Ascending aorta (tissue), 2 donors: ENCODE measurements at regions of chr19 and their contacts with region 1.

Region 1: GRCh38 chr19:1438035-1438932 is at the start of gene RPS15:
- DNase-seq: peak; percentile 63 to 95
- H3K4me3 ChIP-seq: peak within 1 kb of the TSS; percentile 75 to 81
- H3K27ac ChIP-seq: peak within 1 kb of the TSS; percentile 85
- H3K4me1 ChIP-seq: peaks cover 8 to 14% of the 10 kb centered on the region in 2 donors
- H3K27me3 ChIP-seq: no peaks in the 10 kb centered on the region
- CTCF ChIP-seq: peak; percentile 93 to 96 (median 94)
- total RNA-seq, gene RPS15: 3,111 TPM

Region 2: GRCh38 chr19:1260636-1261537 is 177.4 kb before region 1 on chr19:
- intact Hi-C with region 1: no loop called
- DNase-seq: peak; percentile 84 to 98
- H3K4me3 ChIP-seq: peak overlapping the region; percentile 76 to 83
- H3K27ac ChIP-seq: peak overlapping the region; percentile 96 to 99
- H3K4me1 ChIP-seq: peaks cover 25 to 54% of the 10 kb centered on the region in 2 donors
- H3K27me3 ChIP-seq: no peaks in the 10 kb centered on the region
- CTCF ChIP-seq: no peak

Region 3: DNA sequence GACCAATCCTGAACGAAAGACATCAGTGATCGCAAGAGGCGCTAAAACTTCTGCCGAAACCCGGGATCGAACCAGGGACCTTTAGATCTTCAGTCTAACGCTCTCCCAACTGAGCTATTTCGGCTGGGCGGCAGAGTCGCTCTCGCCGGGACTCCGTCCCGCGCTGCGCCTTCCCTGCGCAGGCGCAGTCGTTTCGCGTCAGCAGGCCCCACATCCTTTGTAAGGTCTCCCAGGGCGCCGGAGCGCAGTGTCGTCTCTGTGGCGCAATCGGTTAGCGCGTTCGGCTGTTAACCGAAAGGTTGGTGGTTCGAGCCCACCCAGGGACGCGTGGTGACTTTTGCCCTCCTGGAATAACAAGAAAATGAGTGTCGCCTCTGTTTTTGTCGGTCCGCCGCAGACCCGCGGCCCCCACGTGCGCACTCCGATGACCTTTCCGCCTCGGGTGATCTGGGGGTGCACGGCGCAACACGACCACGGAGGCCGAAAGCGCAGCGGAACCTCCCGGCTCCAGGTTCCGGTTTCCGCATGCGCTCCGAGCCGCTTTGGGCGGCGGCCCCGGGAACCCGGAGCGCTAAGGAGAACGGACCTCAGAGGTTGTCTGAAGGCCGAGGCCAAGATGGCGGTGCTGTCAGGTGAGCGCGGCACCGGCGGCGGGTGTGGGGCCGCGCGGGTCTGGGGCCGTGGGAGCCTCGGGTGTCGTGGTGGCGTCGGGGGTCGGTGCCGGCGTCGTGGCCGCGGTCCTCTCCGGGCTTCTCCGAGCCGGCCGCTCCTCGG is 54.8 kb before region 1 on chr19 and contains the start of gene NDUFS7:
- intact Hi-C with region 1: loop called (anchors 1 kb)
- DNase-seq: peak; percentile 47 to 93
- H3K4me3 ChIP-seq: peak within 1 kb of the TSS; percentile 81
- H3K27ac ChIP-seq: peak within 1 kb of the TSS; percentile 76 to 78
- H3K4me1 ChIP-seq: peaks cover 8 to 10% of the 10 kb centered on the region in 2 donors
- H3K27me3 ChIP-seq: no peaks in the 10 kb centered on the region
- CTCF ChIP-seq: peak in 2 of 3 experiments; percentile 13 to 54
- total RNA-seq, gene NDUFS7: 216 TPM

Region 4: GRCh38 chr19:1406774-1407499 is 31.3 kb before region 1 on chr19:
- intact Hi-C with region 1: loop called (anchors 2 kb)
- DNase-seq: peak; percentile 95 to 99
- H3K4me3 ChIP-seq: peak overlapping the region; percentile 41 to 75
- H3K27ac ChIP-seq: peak overlapping the region; percentile 55 to 61
- H3K4me1 ChIP-seq: peaks cover 31 to 37% of the 10 kb centered on the region in 2 donors
- H3K27me3 ChIP-seq: no peaks in the 10 kb centered on the region
- CTCF ChIP-seq: peak in 1 of 3 experiments; percentile 17

Region 5: DNA sequence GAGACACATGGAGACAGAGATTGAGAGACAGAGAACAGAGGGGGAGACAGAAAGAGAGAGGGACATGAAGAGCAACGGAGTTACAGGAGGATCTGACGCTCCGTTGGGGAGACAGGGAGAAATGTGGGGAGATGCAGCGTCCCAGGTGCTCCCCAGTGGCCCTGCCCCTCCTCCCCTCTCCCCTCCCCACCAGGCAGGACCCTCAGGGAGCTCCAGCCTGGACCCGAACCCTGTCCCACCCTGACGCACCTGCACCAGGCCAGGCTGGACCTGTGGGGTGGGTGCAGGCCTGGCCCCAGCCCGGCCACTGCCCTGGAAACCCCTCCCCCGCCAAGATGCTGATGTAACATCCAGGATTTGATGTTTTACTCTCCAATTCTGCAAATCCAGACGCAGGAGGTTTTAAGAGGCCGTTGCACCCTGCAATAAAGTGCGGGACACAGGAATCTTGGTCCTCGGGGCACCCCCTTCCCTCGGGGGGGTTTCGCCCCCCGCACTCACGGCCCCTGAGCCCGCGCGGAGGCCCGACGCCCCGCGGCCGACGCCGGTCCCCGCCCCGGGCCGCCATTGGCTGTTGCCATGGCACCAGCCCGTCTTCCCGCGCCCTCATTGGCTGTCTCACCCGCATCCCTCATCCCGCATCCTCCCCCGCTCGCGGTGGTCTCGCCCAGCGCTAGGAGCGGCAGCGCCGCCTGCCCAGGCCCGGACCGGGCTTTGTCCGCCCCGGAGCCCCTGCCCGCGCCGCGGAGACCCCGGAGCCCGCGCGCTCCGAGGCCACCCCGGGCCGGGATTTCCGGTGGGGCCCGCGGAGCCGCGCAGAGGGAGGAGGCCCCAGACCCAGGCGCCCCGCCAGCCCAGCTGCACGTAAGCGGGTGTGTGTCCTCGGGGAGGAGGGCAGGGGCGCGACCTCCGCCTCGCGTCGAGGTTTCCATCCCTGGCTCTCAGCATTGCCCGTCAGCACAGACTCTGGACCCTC is 11.5 kb after region 1 on chr19 and contains the start of gene APC2:
- intact Hi-C with region 1: no loop called
- DNase-seq: no peak
- H3K4me3 ChIP-seq: no peak within 1 kb of the TSS
- H3K27ac ChIP-seq: no peak within 1 kb of the TSS
- H3K4me1 ChIP-seq: peaks cover 22 to 28% of the 10 kb centered on the region in 2 donors
- H3K27me3 ChIP-seq: peaks cover 48% of the 10 kb centered on the region
- CTCF ChIP-seq: no peak
- total RNA-seq, gene APC2: not detected

Region 6: DNA sequence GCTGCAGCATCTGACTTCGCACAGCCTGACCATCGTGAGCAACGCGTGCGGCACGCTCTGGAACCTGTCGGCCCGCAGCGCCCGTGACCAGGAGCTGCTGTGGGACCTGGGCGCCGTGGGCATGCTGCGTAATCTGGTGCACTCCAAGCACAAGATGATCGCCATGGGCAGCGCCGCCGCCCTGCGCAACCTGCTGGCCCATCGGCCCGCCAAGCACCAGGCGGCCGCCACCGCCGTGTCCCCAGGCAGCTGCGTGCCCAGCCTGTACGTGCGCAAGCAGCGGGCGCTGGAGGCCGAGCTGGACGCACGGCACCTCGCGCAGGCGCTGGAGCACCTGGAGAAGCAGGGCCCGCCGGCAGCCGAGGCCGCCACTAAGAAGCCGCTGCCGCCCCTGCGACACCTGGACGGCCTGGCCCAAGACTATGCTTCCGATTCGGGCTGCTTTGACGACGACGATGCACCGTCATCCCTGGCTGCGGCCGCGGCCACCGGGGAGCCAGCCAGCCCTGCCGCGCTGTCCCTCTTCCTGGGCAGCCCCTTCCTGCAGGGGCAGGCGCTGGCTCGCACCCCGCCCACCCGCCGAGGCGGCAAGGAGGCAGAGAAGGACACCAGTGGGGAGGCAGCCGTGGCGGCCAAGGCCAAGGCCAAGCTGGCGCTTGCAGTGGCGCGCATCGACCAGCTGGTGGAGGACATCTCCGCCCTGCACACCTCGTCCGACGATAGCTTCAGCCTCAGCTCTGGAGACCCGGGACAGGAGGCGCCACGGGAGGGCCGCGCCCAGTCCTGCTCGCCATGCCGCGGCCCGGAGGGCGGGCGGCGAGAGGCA is 27.1 kb after region 1 on chr19:
- intact Hi-C with region 1: no loop called
- DNase-seq: no peak
- H3K4me3 ChIP-seq: no peak overlapping the region
- H3K27ac ChIP-seq: no peak overlapping the region
- H3K4me1 ChIP-seq: peaks cover 26 to 27% of the 10 kb centered on the region in 2 donors
- H3K27me3 ChIP-seq: peaks cover 37% of the 10 kb centered on the region
- CTCF ChIP-seq: peak in 2 of 3 experiments; percentile 6 to 22

Region 7: DNA sequence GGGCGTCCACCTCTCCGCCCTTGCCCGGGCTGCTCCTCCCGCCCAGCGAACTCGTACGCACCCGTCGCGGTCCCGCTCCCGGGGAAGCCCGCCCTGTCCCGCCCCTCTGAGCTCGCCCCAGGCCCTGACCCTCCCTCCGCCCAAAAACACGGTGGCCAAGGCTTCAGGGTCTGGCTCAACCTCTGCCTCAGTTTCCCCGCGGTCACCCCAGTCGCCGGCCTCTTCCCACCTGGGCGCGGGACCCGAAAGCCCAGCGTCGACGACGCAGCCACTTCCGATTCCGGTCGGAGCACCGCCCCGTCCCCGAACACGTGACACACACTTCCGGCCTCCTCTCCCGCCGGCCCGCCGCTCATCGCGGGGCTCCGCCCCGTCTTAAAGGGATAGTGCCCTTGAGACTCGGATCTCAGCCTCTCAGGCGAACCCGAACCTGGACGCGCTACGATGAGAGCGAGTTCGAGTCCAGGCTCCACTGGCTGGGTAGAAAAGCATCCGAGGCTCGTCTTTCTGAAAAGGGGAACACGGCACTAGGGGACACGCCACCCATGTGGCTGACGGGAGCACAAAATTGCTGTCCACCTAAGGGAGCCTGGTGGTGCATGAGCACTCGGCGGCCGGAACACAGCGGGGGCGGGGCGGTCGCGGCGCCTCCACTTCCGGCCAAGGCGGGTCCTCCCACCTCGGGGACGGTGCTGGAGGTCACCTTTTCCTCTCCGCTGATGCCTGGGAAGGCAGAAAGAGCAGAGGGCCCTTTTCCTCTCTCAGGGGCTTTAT is 40.8 kb after region 1 on chr19 and contains the start of gene C19orf25:
- intact Hi-C with region 1: loop called (anchors 2 kb)
- DNase-seq: peak; percentile 73 to 96
- H3K4me3 ChIP-seq: peak within 1 kb of the TSS; percentile 88 to 90
- H3K27ac ChIP-seq: peak within 1 kb of the TSS; percentile 41 to 62
- H3K4me1 ChIP-seq: peaks cover 2 to 14% of the 10 kb centered on the region in 2 donors
- H3K27me3 ChIP-seq: no peaks in the 10 kb centered on the region
- CTCF ChIP-seq: no peak
- total RNA-seq, gene C19orf25: 32.7 TPM

Region 8: GRCh38 chr19:1490311-1491113 is 52.2 kb after region 1 on chr19 and contains the start of gene PCSK4:
- intact Hi-C with region 1: loop called (anchors 2 kb)
- DNase-seq: peak; percentile 95 to 99
- H3K4me3 ChIP-seq: peak within 1 kb of the TSS; percentile 64 to 82
- H3K27ac ChIP-seq: peak within 1 kb of the TSS; percentile 22 to 67
- H3K4me1 ChIP-seq: peaks cover 8 to 14% of the 10 kb centered on the region in 2 donors
- H3K27me3 ChIP-seq: no peaks in the 10 kb centered on the region
- CTCF ChIP-seq: peak in 1 of 3 experiments; percentile 5
- total RNA-seq, gene PCSK4: 1.5 TPM

Region 9: GRCh38 chr19:1513499-1514294 is 75.4 kb after region 1 on chr19:
- intact Hi-C with region 1: loop called (anchors 5 kb)
- DNase-seq: no peak
- H3K4me3 ChIP-seq: peak overlapping the region; percentile 62 to 73
- H3K27ac ChIP-seq: peak overlapping the region; percentile 75 to 78
- H3K4me1 ChIP-seq: peaks cover 2 to 11% of the 10 kb centered on the region in 2 donors
- H3K27me3 ChIP-seq: no peaks in the 10 kb centered on the region
- CTCF ChIP-seq: peak; percentile 51 to 73 (median 68)